ENCODE measurements at regions of chr14 and their contacts with region 1.

Region 1: DNA sequence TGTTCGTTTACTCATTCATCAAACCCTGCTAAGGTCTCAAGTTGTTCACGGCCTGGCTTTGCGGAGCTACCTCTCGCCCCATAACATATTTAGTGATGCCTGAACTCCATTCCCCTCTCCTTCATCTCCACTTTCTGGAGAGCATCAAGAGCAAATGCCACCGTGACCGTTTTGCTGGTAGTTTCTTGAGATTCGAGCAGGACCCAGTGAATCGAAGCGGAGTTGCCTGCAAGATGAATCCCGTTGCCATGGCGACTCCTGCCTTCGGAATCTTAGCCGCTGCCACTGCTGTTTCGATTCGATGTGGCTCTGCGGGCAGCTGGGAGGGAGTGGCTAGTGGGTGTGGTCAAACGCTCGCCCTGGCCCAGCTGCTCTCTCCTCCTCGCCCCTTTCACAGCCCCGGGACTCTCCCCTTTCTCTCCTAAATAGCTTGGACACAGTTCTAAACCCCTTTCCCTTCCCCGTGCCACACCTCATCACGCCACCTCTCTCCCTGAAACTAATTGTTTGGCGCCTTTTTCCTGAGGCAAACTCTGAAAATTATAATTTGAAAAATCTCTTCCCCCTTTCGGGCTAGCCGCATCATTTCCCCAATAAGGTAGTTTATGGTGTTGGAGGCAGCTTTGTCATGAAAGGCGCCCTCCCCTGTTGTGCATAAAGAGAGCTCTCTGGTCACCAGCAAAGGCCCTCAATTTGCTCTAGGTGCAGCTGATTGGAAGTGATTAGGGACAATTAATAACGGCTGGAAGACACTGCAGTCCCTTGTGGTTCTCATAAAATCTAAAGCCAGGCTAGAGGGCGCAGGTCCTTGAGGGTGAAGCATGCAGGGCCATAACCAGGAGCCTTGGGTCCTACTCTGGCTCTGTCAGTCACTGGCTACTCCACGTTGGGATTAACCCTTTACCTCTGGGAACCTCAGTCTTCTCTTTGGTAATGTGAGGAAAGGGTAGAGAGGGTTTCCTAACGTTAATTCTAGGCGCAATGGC is 1.6 kb downstream of the DAAM1 start:
- DNase-seq: peak; percentile 94 to 95
- ATAC-seq: peak; percentile 74
- H3K4me3 ChIP-seq: peak overlapping the region; percentile 30 to 84
- H3K27ac ChIP-seq: peak overlapping the region; percentile 61 to 94
- H3K4me1 ChIP-seq: peaks cover 2 to 6% of the 10 kb centered on the region in 2 donors
- H3K27me3 ChIP-seq: no peaks in the 10 kb centered on the region

Region 2: GRCh38 chr14:59067127-59067894 is 122.8 kb before region 1 on chr14:
- intact Hi-C with region 1: no loop called
- DNase-seq: no peak
- ATAC-seq: no peak
- H3K4me3 ChIP-seq: no peak overlapping the region
- H3K27ac ChIP-seq: no peak overlapping the region
- H3K4me1 ChIP-seq: no peaks in the 10 kb centered on the region
- H3K27me3 ChIP-seq: no peaks in the 10 kb centered on the region

Region 3: DNA sequence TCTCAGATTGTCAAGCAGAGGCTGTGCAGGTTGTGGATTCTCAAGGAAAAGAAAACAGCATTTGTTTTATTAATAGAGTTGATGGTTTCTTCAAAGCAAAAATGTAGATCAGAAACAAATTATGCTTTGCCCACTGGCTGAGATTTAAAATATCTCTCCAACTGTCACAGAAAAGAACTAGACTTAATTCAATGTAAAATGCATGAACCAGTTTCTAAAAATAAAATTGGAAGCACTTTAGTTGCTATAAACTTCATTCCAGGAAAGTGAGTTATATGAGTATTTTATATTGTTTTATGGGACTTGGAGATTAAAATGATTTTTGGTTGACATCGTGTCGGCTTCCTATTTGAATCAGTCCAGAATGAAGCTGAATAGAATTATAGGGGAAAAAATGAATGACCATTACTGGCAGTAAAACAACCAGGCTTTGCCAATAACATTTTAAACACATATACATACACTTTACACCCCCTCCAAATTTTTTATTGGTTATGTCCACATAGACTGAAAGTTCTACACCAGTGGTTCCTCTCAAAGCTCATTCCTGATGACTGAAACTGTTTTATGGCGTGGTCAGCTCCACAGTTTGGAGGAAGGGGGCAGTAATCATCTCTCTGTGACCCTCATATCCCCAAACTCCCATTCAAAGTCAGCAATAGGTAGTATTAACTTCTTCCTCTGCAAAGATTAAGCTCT is 57.1 kb before region 1 on chr14:
- intact Hi-C with region 1: loop called (anchors 2 to 5 kb)
- DNase-seq: no peak
- ATAC-seq: peak; percentile 29
- H3K4me3 ChIP-seq: no peak overlapping the region
- H3K27ac ChIP-seq: no peak overlapping the region
- H3K4me1 ChIP-seq: peaks cover 0 to 6% of the 10 kb centered on the region in 2 donors
- H3K27me3 ChIP-seq: no peaks in the 10 kb centered on the region

Region 4: DNA sequence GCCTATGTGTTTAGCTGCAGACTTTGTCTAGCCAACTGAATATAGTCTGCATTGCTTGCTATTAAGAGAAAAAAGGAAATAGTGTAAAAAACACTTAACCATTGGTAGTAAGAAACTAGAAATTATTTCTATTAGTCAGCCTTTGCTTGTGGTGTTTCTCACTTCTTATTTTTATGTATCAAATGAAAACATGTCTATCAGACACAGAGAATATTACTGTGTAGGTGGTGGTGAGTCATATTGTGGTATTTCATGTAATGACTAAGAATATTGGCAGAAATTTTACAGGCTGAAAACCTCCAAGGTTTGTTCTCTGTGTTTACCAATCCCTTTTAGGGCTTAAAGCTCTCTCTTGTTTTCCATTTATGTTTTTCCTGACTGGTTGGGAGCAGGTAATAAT is 85.6 kb after region 1 on chr14:
- intact Hi-C with region 1: loop called in 1 of 2 experiments (anchors 5 kb)
- DNase-seq: no peak
- ATAC-seq: peak; percentile 70
- H3K4me3 ChIP-seq: no peak overlapping the region
- H3K27ac ChIP-seq: peak overlapping the region in 1 of 2 donors; percentile 76
- H3K4me1 ChIP-seq: peaks cover 4 to 9% of the 10 kb centered on the region in 2 donors
- H3K27me3 ChIP-seq: no peaks in the 10 kb centered on the region

Region 5: GRCh38 chr14:59316151-59316830 is 126.2 kb after region 1 on chr14:
- intact Hi-C with region 1: loop called in 1 of 2 experiments (anchors 5 kb)
- DNase-seq: no peak
- ATAC-seq: no peak
- H3K4me3 ChIP-seq: no peak overlapping the region
- H3K27ac ChIP-seq: no peak overlapping the region
- H3K4me1 ChIP-seq: peaks cover 8 to 24% of the 10 kb centered on the region in 2 donors
- H3K27me3 ChIP-seq: no peaks in the 10 kb centered on the region

Region 6: GRCh38 chr14:59333668-59334067 is 143.6 kb after region 1 on chr14:
- intact Hi-C with region 1: loop called in 1 of 2 experiments (anchors 5 kb)
- DNase-seq: no peak
- ATAC-seq: peak; percentile 90
- H3K4me3 ChIP-seq: no peak overlapping the region
- H3K27ac ChIP-seq: peak overlapping the region in 1 of 2 donors; percentile 95
- H3K4me1 ChIP-seq: peaks cover 4 to 12% of the 10 kb centered on the region in 2 donors
- H3K27me3 ChIP-seq: no peaks in the 10 kb centered on the region

Region 7: DNA sequence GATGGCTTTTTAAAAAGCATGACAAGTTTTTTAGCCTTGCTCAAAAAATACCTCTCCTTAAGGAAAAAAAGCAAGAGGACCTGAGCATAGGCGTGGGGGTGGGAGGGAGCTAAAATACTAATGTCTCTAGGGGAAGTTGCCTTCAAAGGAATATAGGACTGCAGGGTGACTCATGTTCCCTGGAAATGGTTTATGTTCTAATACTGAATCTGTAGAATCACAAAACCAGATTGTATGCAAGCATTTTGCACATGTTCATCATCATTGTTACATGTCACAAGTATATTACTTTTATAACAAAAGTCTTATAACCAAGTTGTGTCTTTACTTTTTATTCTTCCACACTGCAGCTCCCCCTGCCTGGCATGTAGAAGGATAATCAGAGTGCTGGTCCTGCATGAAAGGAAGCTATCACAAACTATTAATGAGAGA is 238.5 kb after region 1 on chr14:
- intact Hi-C with region 1: loop called (anchors 5 kb)
- DNase-seq: no peak
- ATAC-seq: peak; percentile 33
- H3K4me3 ChIP-seq: no peak overlapping the region
- H3K27ac ChIP-seq: peak overlapping the region; percentile 11 to 62
- H3K4me1 ChIP-seq: peaks cover 3 to 7% of the 10 kb centered on the region in 2 donors
- H3K27me3 ChIP-seq: no peaks in the 10 kb centered on the region

Region 8: GRCh38 chr14:59438195-59438647 is 248.1 kb after region 1 on chr14:
- intact Hi-C with region 1: loop called in 1 of 2 experiments (anchors 5 kb)
- DNase-seq: no peak
- ATAC-seq: no peak
- H3K4me3 ChIP-seq: no peak overlapping the region
- H3K27ac ChIP-seq: no peak overlapping the region
- H3K4me1 ChIP-seq: peaks cover 3 to 8% of the 10 kb centered on the region in 2 donors
- H3K27me3 ChIP-seq: no peaks in the 10 kb centered on the region